ENCODE measurements at regions of chr1 and their contacts with region 1.

Region 1: DNA sequence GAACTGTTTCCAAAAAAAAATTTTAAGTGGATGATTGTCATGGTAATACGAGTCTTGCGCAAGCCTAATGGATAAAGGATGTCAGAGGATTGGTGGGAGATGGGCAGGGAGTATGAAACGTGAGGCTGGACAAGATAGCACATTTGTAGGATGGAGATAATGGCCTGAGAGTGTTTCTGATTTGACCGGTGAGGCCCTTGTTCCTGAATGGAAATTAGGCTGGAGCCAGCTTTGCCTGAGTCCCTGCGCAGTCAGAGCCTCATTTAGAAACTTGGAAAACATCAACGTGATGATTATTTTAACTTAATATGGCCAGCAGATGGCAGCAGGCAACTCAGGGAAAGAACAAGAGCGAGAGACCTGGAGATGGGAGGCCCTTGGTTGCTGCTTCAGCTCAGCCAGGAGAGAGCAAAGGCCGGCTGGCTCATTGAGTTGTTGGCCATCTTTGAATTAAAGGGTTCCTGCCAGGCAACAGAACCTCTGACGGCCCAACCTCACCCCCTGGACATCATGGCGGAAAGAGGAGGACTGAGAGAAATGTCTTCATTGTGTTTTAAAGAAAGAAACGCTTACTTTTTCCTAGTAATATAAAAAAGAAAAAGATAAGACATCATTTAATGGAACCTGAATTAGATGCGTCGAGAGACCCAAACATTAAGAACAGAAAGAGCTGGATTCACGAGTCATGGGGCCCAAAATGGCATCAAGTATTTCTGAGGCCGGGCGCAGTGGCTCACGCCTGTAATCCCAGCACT is 80.3 kb downstream of the SELENOF start:
- DNase-seq: peak; percentile 88
- ATAC-seq: peak; percentile 96
- H3K4me3 ChIP-seq: no peak overlapping the region
- H3K27ac ChIP-seq: no peak overlapping the region
- H3K4me1 ChIP-seq: no peaks in the 10 kb centered on the region
- H3K27me3 ChIP-seq: no peaks in the 10 kb centered on the region
- CTCF ChIP-seq: peak; percentile 81

Region 2: GRCh38 chr1:86616871-86617270 is 216.8 kb before region 1 on chr1:
- CTCF ChIA-PET with region 1: no interaction called
- POLR2A ChIA-PET with region 1: no interaction called
- intact Hi-C with region 1: no loop called
- DNase-seq: no peak
- ATAC-seq: no peak
- H3K4me3 ChIP-seq: no peak overlapping the region
- H3K27ac ChIP-seq: no peak overlapping the region
- H3K4me1 ChIP-seq: no peaks in the 10 kb centered on the region
- H3K27me3 ChIP-seq: peaks cover 24% of the 10 kb centered on the region
- CTCF ChIP-seq: no peak

Region 3: GRCh38 chr1:86779308-86780191 is 54.1 kb before region 1 on chr1:
- CTCF ChIA-PET with region 1: interaction called, 5 read pairs
- POLR2A ChIA-PET with region 1: interaction called, 8 read pairs
- intact Hi-C with region 1: loop called (anchors 5 kb)
- DNase-seq: peak; percentile 68
- ATAC-seq: peak; percentile 60
- H3K4me3 ChIP-seq: no peak overlapping the region
- H3K27ac ChIP-seq: peak overlapping the region; percentile 26
- H3K4me1 ChIP-seq: peaks cover 32% of the 10 kb centered on the region
- H3K27me3 ChIP-seq: no peaks in the 10 kb centered on the region
- CTCF ChIP-seq: no peak

Region 4: DNA sequence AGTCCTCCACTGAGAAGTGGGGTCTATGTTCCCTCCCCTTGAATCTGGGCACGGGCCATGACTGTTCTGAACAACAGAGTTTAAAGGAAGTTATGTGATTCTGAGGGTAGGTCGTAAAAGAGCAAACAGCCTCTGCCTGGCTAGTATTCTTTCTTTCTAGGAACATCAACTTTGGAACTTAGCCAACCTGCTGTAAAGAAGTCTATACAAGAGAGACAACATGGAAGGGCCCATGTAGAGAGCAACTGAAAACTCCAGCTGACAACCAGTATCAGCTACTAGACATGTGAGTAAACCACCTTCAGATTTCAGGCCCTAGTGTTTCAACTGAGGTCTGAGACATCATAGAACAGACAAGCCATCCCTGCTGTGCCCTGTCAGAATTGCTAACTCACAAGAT is 72.8 kb after region 1 on chr1:
- CTCF ChIA-PET with region 1: no interaction called
- POLR2A ChIA-PET with region 1: no interaction called
- intact Hi-C with region 1: no loop called
- DNase-seq: peak; percentile 8
- ATAC-seq: no peak; the same call in 1 of the 2 replicates
- H3K4me3 ChIP-seq: no peak overlapping the region
- H3K27ac ChIP-seq: no peak overlapping the region
- H3K4me1 ChIP-seq: no peaks in the 10 kb centered on the region
- H3K27me3 ChIP-seq: no peaks in the 10 kb centered on the region
- CTCF ChIP-seq: no peak

Region 5: DNA sequence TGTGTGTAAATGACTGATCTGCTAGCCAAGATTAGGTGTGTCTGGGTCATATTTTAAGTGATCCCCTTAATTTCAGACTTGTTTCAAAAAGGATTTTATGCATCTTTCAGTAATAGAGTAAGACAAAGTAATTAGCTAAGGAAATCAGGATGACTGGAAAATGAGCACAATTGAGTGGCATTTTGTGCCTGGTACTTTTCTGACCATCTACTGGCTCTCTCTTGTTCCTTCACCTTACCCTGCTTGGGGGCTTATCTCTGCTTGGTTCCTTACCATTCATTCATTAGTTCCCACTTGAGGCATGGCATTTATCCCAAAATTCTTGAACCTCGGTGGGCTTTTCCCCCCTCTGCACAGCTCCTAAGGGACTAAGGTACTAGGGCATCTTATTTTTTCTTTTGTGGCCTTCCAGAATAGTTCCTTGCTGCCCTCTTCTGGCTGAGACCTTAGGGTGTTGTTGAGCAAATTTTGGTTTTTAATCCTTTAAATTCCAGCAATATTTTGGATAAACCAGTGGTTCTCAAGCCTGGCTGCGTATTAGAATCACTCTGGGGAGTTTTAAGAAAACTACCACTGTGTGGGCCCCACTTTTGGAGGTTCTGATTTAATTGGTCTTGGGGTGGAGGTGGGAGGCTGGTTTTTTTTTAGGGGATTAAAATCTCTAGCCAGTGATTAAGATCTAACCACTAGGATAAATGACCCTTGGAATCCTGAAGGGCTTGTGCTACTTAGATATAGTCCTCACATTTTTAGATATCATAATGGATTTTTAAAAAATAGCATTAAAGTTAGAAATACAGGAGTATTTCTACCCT is 131.6 kb after region 1 on chr1:
- CTCF ChIA-PET with region 1: interaction called, 4 read pairs
- POLR2A ChIA-PET with region 1: no interaction called
- intact Hi-C with region 1: loop called (anchors 1 kb)
- DNase-seq: peak; percentile 57
- ATAC-seq: peak; percentile 61
- H3K4me3 ChIP-seq: no peak overlapping the region
- H3K27ac ChIP-seq: no peak overlapping the region
- H3K4me1 ChIP-seq: no peaks in the 10 kb centered on the region
- H3K27me3 ChIP-seq: no peaks in the 10 kb centered on the region
- CTCF ChIP-seq: peak; percentile 85